ENCODE measurements at regions of chr6 and their contacts with region 1.

Region 1: GRCh38 chr6:83853178-83854000 is at the start of gene RIPPLY2:
- DNase-seq: peak; percentile 67 to 97 (median 80)

Region 2: DNA sequence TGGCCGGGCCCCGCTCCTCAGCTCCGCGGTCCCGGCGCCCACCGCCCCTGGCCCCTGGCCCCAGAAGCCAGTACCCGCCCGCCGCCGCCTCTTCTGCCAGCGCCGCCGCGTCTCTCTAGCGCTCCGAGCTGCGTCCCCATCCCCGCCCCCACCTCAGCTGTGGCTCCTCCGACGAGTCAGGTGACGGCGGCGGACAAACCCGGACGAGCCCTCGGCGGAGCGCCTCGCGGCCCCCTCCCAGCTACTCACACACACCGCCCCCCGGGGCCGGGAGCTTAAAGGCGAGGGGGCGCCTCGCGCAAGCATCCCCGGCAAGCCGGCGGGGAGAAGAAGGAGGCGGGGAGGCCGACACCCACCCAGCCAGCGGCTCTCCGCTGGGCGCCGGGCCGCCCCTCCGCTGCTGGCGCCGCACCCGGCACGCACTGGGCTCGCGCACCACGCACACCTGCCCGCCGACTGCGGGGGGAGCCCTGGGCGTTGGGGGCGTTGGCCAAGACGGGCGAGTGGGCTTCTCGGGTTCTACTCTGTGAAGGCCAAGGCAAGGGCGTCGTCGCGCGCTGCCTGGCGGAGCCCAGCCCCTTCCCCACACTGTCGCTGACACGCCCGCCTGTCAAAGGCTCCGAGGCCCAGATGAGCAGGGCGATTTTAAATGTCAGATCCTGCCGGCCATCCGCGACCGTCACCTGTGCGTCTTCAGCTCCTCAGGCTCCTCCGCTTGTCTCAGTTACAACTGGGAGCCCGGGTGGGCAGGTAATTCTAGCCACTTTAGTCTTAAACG is 144.2 kb before region 1 on chr6 and contains the start of gene SNAP91:
- intact Hi-C with region 1: loop called (anchors 2 kb)
- DNase-seq: peak; percentile 68 to 97 (median 87)